Sciatic nerve (tissue), 2 donors: ENCODE measurements at regions of chr22 and their contacts with region 1.

Region 1: DNA sequence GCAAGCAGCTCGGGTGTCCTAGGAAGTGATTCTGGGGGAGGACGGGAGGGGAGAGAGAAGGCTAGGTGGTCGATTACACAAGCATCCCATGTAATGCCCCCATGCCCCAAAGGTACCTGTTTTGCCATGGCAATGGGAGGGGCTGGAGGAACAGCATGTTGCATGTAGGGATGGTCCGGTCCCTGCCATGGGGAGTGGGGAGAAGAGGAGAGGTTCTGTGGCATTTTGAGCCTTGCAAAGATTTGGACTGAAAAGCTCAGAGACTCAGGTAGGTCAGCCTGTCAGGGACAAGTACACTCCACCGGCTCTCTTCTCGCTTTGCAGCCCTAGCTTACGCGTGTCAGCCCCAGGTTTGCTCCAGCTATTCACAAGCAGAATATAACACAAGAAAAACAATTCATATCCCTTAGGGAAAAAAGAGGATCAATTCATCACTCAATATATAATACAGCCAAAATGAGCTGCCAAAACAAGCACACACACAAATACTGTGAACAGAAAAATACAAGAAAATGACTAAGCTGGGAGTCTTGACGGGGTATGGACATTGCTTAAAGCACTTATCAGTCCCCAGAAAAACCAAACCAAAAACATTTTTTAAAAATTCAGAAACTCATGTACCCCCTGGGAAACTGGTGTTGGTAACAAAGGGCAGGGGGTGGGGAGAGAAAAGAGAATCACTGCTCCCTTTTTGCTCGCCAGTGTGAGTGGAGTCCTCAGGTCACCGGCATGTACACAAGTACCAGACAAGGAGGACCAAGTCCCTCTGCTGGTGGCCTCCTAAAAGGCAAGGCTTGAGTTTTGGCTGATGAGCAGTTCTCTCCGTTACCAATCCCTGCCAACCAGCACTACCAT is 21.6 kb downstream of the APOL5 start:
- DNase-seq: no peak
- ATAC-seq: peak; percentile 77

Region 2: GRCh38 chr22:35660291-35661127 is 78.8 kb before region 1 on chr22:
- intact Hi-C with region 1: loop called (anchors 5 kb)
- DNase-seq: no peak
- ATAC-seq: peak; percentile 55

Region 3: GRCh38 chr22:35846804-35847203 is 107.5 kb after region 1 on chr22:
- intact Hi-C with region 1: no loop called
- DNase-seq: no peak
- ATAC-seq: no peak